Uterus (tissue), 4 donors: ENCODE measurements at regions of chr5 and their contacts with region 1.

Region 1: DNA sequence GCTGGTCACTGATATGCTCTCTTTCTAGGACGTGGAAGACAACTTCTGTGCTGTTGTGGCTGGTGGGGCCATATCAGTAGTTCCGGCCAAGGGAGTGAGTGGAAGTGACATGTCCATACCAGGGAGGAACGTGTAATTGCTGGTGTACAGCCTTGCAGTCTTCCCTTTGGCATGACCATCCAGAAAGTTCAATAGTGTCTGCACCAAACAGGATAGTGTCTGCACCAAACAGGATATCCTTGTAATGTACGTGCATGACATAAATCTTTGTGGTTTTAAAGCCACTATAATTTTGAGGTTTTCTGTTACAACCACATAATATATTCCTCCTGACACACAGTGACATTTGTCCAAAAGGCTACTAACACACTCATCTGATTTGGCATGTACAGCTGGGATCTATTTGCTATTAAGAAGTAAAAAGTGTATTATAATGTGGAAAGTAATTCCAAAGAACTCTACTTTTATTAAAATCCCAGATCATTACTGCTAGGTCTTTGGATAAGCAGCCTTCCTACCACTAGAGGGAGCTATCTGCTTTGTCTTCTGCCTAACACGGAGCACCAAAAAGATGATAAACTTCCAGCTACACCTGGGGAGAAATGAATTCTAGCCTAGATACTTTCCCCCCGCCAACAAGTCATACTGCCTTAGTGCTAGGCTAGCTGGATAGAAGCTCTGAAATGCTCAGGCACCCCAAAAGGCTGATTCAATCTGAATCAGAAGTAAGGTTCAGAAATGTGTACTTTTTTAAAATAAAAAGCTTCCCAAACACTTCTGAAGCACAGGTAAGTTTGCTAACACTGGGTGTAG is 52.7 kb downstream of the RNF145 start:
- DNase-seq: peak in 1 of 2 donors; percentile 53
- H3K4me3 ChIP-seq: no peak overlapping the region
- H3K27ac ChIP-seq: peak overlapping the region in 1 of 2 donors; percentile 1
- H3K4me1 ChIP-seq: no peaks in the 10 kb centered on the region
- H3K27me3 ChIP-seq: no peaks in the 10 kb centered on the region
- CTCF ChIP-seq: peak; percentile 82 to 88 (median 85)
- POLR2A ChIP-seq: no peak

Region 2: GRCh38 chr5:158967541-158967940 is 189.1 kb before region 1 on chr5:
- intact Hi-C with region 1: no loop called
- DNase-seq: no peak
- H3K4me3 ChIP-seq: no peak overlapping the region
- H3K27ac ChIP-seq: peak overlapping the region in 1 of 2 donors; percentile 26
- H3K4me1 ChIP-seq: no peaks in the 10 kb centered on the region
- H3K27me3 ChIP-seq: no peaks in the 10 kb centered on the region
- CTCF ChIP-seq: no peak
- POLR2A ChIP-seq: no peak

Region 3: DNA sequence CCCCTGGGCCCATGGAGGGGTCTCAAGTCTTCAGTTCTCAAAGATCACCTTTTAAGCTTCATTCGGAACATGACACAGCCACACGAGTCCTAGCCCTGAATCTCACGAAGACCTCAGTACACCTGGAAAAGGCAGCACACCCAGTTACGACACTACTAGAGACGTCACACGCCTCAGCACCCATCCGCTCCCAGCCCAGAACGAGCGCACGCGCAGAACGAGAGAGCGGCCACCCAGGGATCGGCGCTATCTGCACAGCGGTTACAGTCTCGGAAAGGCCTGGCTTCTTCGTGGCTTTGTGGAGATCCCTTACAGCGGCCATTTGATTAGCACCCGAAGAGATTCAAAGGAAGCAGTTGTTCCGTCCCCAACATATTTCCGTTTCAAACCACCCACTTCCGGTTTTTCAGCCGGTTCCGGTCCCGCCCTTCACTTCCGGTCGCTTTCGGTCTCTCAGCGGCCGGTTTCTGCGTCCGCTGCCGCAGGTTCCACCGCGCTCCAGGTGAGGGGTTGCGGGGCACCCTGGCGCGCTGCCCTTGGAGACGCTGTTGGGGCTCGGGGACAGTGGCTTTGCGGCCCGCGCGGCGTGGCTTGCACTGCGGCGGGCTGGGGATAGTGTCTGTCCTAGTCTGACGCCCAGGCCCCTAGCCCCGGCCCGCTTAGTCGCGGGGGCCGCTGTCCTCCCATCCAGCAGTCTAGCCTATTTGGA is 106.4 kb after region 1 on chr5 and contains the start of gene UBLCP1:
- intact Hi-C with region 1: loop called (anchors 10 kb)
- DNase-seq: peak; percentile 76 to 78
- H3K4me3 ChIP-seq: peak within 1 kb of the TSS; percentile 68 to 93
- H3K27ac ChIP-seq: peak within 1 kb of the TSS; percentile 86 to 87
- H3K4me1 ChIP-seq: no peaks in the 10 kb centered on the region
- H3K27me3 ChIP-seq: no peaks in the 10 kb centered on the region
- CTCF ChIP-seq: no peak
- POLR2A ChIP-seq: peak in 1 of 2 donors; percentile 50
- total RNA-seq, gene UBLCP1: 7.4 to 39.0 (median 21.6) TPM